ENCODE measurements at regions of chr7 and their contacts with region 1.

Region 1: GRCh38 chr7:137606061-137606674 is 240.6 kb downstream of the DGKI start:
- DNase-seq: peak; percentile 80
- ATAC-seq: no peak
- H3K4me3 ChIP-seq: no peak overlapping the region
- H3K27ac ChIP-seq: no peak overlapping the region
- H3K4me1 ChIP-seq: no peaks in the 10 kb centered on the region
- H3K27me3 ChIP-seq: peaks cover 73% of the 10 kb centered on the region
- CTCF ChIP-seq: peak; percentile 58; the same call in 1 of the 2 replicates

Region 2: DNA sequence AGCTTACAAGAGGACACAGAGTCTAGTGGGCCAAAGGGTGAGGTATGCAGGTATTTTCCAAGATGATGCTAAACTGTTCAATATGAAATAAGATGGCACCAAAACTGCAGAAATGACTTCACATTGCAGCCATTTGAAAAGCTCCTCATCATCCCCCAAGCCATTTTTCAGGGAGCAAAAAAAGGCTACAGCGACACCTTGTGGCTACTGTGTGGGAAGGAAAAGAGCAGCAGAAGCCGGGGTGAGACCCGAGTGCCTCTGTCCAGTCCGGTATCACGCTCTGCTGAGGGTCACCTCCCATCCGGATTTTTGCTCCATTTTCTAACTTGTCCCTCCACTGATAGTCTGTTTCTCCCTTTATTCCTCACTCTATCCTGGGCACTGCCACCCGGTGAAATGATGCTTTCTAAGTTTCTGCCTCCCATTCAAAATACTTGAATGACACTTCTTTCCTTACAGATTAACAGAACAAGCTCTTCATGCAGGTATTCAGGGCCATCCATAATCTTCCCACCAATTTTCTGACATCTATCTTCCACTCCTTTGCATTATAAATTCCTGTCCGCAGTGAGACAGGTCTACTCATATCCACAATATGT is 20.4 kb after region 1 on chr7:
- CTCF ChIA-PET with region 1: interaction called, 7 read pairs
- POLR2A ChIA-PET with region 1: no interaction called
- intact Hi-C with region 1: loop called (anchors 1 kb)
- DNase-seq: peak; percentile 70
- ATAC-seq: peak; percentile 67
- H3K4me3 ChIP-seq: no peak overlapping the region
- H3K27ac ChIP-seq: no peak overlapping the region
- H3K4me1 ChIP-seq: no peaks in the 10 kb centered on the region
- H3K27me3 ChIP-seq: peaks cover 37% of the 10 kb centered on the region
- CTCF ChIP-seq: peak; percentile 83